ENCODE measurements at regions of chr6 and their contacts with region 1.

Region 1: GRCh38 chr6:136037876-136038460 is 186.5 kb downstream of the PDE7B start:
- DNase-seq: no peak
- ATAC-seq: peak; percentile 69

Region 2: GRCh38 chr6:136077834-136078576 is 40.0 kb after region 1 on chr6:
- intact Hi-C with region 1: loop called (anchors 5 kb)
- DNase-seq: no peak
- ATAC-seq: peak; percentile 57

Region 3: GRCh38 chr6:136158387-136158821 is 120.4 kb after region 1 on chr6:
- intact Hi-C with region 1: loop called (anchors 5 kb)
- DNase-seq: peak; percentile 82
- ATAC-seq: peak; percentile 95

Measured in Right ventricle myocardium inferior (tissue), 1 donor.